CD8-positive, alpha-beta T cell (primary cell): ENCODE measurements at regions of chr1 and their contacts with region 1.

Region 1: DNA sequence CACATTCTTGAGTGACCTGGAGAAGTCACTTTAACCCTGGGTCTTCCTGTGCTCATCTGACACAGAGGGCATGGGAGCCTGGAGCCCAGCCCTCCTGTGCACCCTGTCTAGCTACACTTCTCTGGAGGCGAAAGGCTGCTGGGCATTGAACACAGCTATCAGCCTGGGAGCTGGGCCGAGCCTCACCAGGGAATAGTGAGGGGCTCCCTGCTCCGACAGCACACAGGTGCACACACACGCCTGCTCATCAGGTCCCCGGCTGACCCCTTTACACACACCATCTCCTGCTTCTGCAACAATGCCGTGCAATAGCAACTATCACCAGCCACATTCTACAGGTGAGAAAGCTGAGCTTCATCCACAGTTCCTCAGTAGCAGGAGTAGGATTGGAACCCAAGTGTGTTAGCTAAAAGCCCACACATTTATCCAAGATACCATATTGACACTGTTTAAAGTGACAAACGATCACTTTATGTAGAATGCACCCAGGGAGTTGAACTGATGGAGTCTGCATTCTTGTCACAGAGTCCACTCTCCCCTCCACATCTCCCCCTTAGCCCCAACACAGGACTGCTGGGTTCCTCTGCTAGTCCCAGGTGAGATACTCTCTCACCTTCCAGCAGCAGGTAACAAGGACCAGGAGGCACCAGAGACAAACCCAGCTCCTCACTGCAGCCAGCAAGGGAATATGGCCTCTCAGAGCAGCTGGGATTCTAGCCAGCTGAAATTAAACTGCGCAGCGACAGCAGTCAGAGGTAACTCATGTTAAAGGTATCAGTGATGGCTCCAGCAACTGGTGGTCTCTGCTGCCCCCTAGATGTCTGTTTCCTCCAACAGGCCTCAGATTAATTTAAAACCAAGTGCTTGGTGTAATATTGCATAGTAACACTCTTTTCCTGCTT is 18.3 kb upstream of the CAPN8 start:
- DNase-seq: peak; percentile 44 to 75 (median 67)
- ATAC-seq: peak; percentile 51
- H3K4me3 ChIP-seq: no peak overlapping the region
- H3K4me3 Mint-ChIP-seq: no peak overlapping the region
- H3K27ac ChIP-seq: no peak overlapping the region
- H3K27ac Mint-ChIP-seq: no peak overlapping the region
- H3K4me1 ChIP-seq: no peaks in the 10 kb centered on the region
- H3K4me1 Mint-ChIP-seq: peaks cover 3% of the 10 kb centered on the region
- H3K27me3 ChIP-seq: no peaks in the 10 kb centered on the region
- H3K27me3 Mint-ChIP-seq: peaks cover 13% of the 10 kb centered on the region
- CTCF ChIP-seq: peak; percentile 69

Region 2: GRCh38 chr1:222736972-222737371 is 946.9 kb before region 1 on chr1 and contains the start of gene FAM177B:
- CTCF ChIA-PET with region 1: interaction called, 3 read pairs
- POLR2A ChIA-PET with region 1: no interaction called
- intact Hi-C with region 1: loop called in 1 of 2 experiments (anchors 2 kb)
- DNase-seq: no peak
- ATAC-seq: no peak
- H3K4me3 ChIP-seq: no peak within 1 kb of the TSS
- H3K4me3 Mint-ChIP-seq: no peak within 1 kb of the TSS
- H3K27ac ChIP-seq: no peak within 1 kb of the TSS
- H3K27ac Mint-ChIP-seq: no peak within 1 kb of the TSS
- H3K4me1 ChIP-seq: no peaks in the 10 kb centered on the region
- H3K4me1 Mint-ChIP-seq: no peaks in the 10 kb centered on the region
- H3K27me3 ChIP-seq: no peaks in the 10 kb centered on the region
- H3K27me3 Mint-ChIP-seq: no peaks in the 10 kb centered on the region
- CTCF ChIP-seq: no peak
- total RNA-seq, gene FAM177B: not detected

Region 3: DNA sequence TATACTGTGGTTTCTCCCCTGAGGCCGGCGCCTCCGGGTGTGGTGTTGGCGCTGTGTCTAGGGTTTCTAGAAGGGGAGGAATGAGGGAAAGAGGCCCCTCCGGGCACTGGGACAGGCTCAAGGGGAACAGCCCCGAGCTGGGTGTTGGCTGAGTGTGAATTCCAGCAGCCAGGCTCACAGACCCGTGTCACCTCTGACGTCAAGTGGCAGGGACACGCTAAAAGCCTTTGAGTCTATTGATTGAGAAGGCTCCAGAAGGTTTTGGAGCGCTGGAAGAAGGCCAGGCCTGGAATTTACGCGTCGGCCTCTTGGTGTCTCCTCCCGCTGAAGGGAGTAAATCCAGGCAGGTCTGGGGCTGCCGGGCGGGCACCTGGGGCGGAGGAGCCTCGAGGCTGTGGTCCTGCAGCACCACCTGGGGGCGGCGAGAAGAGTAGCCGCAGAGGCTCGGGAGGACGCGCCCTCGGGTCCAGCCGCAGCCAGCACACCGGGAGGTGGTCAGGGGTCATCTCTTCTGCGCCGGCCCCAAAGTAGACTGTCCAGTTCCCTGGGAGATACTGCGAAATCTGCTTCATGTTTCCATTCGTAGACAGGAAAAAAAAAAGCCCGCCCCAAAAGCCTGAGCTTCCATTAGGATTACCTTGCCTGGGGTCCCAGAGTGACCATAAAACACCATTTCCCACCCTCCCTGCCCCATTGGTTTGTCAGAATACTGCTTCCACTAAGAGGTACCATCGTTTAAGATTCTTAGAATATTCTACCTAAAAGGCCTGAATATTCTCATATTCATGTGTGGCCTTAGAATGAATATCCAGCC is 602.4 kb before region 1 on chr1:
- CTCF ChIA-PET with region 1: no interaction called
- POLR2A ChIA-PET with region 1: no interaction called
- intact Hi-C with region 1: loop called in 1 of 2 experiments (anchors 1 kb)
- DNase-seq: peak; percentile 45 to 82 (median 70)
- ATAC-seq: peak; percentile 97
- H3K4me3 ChIP-seq: peak overlapping the region; percentile 45
- H3K4me3 Mint-ChIP-seq: peak overlapping the region; percentile 68
- H3K27ac ChIP-seq: peak overlapping the region in 1 of 2 experiments; percentile 16
- H3K27ac Mint-ChIP-seq: peak overlapping the region; percentile 41
- H3K4me1 ChIP-seq: peaks cover 4% of the 10 kb centered on the region
- H3K4me1 Mint-ChIP-seq: no peaks in the 10 kb centered on the region
- H3K27me3 ChIP-seq: peaks cover 0 to 3% of the 10 kb centered on the region in 2 experiments
- H3K27me3 Mint-ChIP-seq: peaks cover 2% of the 10 kb centered on the region
- CTCF ChIP-seq: peak; percentile 66

Region 4: DNA sequence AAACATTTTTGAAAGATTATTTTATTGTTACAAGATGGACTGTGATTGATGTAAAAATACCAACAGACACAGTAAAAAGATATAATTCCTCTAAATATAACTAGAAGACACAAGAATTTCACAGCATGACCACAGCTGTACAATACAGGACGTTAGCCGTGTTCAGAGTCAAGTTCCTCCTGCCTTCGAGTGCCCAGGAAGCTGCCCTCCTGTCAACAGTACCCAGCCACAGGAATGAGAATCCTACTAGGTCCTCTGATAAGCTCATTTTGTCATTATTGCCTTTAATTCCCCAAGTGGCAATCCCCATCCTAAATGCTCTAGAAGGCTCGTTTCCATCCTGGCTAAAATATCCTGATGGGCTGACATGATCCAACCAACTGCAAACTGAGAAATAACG is 12.1 kb after region 1 on chr1:
- CTCF ChIA-PET with region 1: interaction called, 13 read pairs
- POLR2A ChIA-PET with region 1: no interaction called
- intact Hi-C with region 1: no loop called
- DNase-seq: no peak
- ATAC-seq: no peak
- H3K4me3 ChIP-seq: no peak overlapping the region
- H3K4me3 Mint-ChIP-seq: no peak overlapping the region
- H3K27ac ChIP-seq: no peak overlapping the region
- H3K27ac Mint-ChIP-seq: no peak overlapping the region
- H3K4me1 ChIP-seq: peaks cover 7% of the 10 kb centered on the region
- H3K4me1 Mint-ChIP-seq: peaks cover 6% of the 10 kb centered on the region
- H3K27me3 ChIP-seq: no peaks in the 10 kb centered on the region
- H3K27me3 Mint-ChIP-seq: no peaks in the 10 kb centered on the region
- CTCF ChIP-seq: no peak